Heart right ventricle (tissue), 16 donors: ENCODE measurements at regions of chr2 and their contacts with region 1.

Region 1: DNA sequence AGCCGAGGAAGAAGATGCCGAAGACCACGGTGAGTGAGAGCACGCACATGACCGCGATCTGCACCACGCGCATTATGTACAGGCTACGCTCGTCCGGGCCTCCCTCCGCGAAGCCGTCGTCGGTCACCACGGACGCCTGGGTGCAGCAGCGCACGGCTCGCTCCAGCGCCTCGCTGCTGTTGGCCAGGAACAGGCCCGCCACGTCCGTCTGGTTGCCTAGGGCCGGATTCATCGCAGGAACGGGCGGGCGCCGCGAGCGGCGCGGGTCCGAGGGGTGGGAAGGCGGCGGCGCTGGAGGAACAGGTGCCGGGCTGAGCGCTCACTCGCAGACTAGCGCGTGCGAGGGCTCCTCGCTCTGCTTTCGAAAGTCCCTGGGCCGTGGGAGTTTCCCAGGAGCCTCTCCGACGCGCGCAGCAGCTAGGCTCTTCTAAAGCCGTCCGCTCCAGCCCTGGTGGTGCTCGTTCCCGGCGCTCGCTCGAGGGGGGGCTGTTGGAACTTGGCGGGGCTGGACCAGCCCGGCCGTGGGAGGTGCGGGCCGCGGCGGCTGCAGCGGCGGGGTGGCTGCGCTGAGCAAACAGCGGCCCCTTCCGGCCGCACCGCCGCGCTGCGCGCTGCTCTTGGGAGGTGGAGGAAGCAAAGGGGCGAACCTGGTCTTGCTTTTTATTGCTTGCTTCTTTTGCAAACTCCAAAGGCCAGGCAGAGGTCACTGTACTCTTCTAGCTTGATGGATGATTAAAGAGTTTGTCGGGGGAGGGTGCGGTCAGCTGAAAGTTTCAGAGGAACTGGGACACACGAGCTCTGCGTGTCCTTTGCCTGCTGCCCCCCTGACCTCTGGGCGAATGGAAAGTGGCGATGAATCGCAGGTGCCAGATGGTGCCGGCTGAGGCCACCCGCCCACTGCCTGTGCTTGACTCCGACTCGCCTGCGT is at the start of gene RPRM:
- DNase-seq: peak; percentile 46 to 73
- ATAC-seq: peak; percentile 87 to 95 (median 91)
- H3K4me3 ChIP-seq: peak within 1 kb of the TSS; percentile 16 to 59 (median 52)
- H3K27ac ChIP-seq: no peak within 1 kb of the TSS
- H3K4me1 ChIP-seq: peaks cover 7 to 31% (median 27%) of the 10 kb centered on the region in 9 donors
- H3K27me3 ChIP-seq: peaks cover 11 to 98% (median 84%) of the 10 kb centered on the region in 7 donors
- CTCF ChIP-seq: peak; percentile 66 to 92 (median 87)
- total RNA-seq, gene RPRM: 0.16 TPM in 1 of 10 donors, not detected in the others

Region 2: GRCh38 chr2:151556121-151556520 is 1922.5 kb before region 1 on chr2:
- intact Hi-C with region 1: no loop called
- DNase-seq: no peak
- ATAC-seq: no peak
- H3K4me3 ChIP-seq: no peak overlapping the region
- H3K27ac ChIP-seq: no peak overlapping the region
- H3K4me1 ChIP-seq: peaks cover 0 to 7% (median 0%) of the 10 kb centered on the region in 9 donors
- H3K27me3 ChIP-seq: no peaks in the 10 kb centered on the region
- CTCF ChIP-seq: no peak

Region 3: DNA sequence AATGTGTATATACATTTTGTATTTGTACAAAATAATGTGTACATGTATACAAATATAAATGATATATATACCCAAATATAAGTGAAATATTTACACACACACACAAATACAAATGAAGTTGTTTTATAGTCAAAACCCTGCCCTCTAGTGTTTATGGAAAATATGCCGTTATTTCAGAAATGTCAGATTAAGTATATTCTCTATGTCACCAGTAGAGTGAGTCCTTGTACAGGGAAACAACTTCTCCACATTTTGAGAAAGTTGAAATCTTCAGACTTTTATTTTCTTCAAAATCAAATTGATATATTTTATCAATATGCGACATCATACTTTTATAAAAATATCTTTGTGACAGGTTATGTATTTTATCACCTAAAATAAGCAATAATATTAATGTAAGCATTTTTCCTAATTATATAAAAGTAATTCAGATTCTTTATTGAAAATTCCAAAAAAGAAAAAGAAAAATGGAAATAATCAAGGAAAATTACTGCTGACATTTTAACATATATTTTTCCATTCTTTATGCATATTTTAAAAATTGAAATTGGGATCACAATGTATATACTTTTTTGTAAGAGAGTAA is 737.8 kb before region 1 on chr2:
- intact Hi-C with region 1: loop called in 1 of 10 experiments (anchors 10 kb)
- DNase-seq: no peak
- ATAC-seq: peak in 1 of 8 donors; percentile 42
- H3K4me3 ChIP-seq: no peak overlapping the region
- H3K27ac ChIP-seq: no peak overlapping the region
- H3K4me1 ChIP-seq: no peaks in the 10 kb centered on the region
- H3K27me3 ChIP-seq: no peaks in the 10 kb centered on the region
- CTCF ChIP-seq: peak; percentile 51 to 89 (median 70)

Region 4: DNA sequence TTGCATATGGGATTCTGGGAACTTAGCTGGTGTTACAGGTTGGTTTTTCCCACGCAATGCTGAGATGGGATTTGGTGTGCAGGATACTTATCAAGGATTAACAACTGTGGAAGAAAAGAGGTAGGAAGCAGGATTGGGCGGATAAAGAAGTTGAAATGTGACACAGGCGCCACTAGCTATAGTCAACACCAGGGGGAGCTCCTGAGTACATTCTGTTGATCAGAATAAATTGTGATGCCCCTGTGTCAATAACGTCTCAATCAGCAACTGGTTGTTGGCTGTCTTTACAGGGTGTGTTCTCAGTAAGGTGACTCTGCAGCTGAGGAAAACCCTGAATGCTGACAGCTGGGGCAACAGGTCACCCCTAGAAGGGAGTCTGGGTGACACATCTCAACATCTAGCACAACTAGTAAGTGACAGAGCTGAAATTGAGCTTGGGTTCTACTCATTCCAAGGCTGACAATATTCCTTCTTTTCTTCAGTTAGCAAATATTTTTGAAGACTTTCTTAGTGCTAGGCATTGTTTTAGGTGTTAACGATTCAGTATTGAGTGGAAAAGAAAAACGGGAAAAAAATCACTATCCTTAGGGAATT is 617.2 kb before region 1 on chr2:
- intact Hi-C with region 1: loop called in 3 of 10 experiments (anchors 10 kb)
- DNase-seq: peak in 1 of 2 donors; percentile 11
- ATAC-seq: no peak
- H3K4me3 ChIP-seq: no peak overlapping the region
- H3K27ac ChIP-seq: no peak overlapping the region
- H3K4me1 ChIP-seq: no peaks in the 10 kb centered on the region
- H3K27me3 ChIP-seq: peaks cover 0 to 6% (median 0%) of the 10 kb centered on the region in 7 donors
- CTCF ChIP-seq: peak in 8 of 9 donors; percentile 7 to 71 (median 52)

Region 5: GRCh38 chr2:153519257-153519875 is 40.8 kb after region 1 on chr2:
- intact Hi-C with region 1: no loop called
- DNase-seq: peak in 1 of 2 donors; percentile 20
- ATAC-seq: no peak
- H3K4me3 ChIP-seq: no peak overlapping the region
- H3K27ac ChIP-seq: no peak overlapping the region
- H3K4me1 ChIP-seq: no peaks in the 10 kb centered on the region
- H3K27me3 ChIP-seq: peaks cover 0 to 3% (median 0%) of the 10 kb centered on the region in 7 donors
- CTCF ChIP-seq: peak; percentile 54 to 86 (median 70)